Prostate gland (tissue), 2 donors: ENCODE measurements at regions of chrX and their contacts with region 1.

Region 1: GRCh38 chrX:135521405-135522189 is 1.1 kb downstream of the INTS6L start:
- DNase-seq: peak; percentile 78
- H3K4me3 ChIP-seq: peak overlapping the region; percentile 51 to 64
- H3K27ac ChIP-seq: peak overlapping the region; percentile 86 to 89
- H3K4me1 ChIP-seq: no peaks in the 10 kb centered on the region
- H3K27me3 ChIP-seq: no peaks in the 10 kb centered on the region
- CTCF ChIP-seq: no peak
- POLR2A ChIP-seq: peak; percentile 38

Region 2: DNA sequence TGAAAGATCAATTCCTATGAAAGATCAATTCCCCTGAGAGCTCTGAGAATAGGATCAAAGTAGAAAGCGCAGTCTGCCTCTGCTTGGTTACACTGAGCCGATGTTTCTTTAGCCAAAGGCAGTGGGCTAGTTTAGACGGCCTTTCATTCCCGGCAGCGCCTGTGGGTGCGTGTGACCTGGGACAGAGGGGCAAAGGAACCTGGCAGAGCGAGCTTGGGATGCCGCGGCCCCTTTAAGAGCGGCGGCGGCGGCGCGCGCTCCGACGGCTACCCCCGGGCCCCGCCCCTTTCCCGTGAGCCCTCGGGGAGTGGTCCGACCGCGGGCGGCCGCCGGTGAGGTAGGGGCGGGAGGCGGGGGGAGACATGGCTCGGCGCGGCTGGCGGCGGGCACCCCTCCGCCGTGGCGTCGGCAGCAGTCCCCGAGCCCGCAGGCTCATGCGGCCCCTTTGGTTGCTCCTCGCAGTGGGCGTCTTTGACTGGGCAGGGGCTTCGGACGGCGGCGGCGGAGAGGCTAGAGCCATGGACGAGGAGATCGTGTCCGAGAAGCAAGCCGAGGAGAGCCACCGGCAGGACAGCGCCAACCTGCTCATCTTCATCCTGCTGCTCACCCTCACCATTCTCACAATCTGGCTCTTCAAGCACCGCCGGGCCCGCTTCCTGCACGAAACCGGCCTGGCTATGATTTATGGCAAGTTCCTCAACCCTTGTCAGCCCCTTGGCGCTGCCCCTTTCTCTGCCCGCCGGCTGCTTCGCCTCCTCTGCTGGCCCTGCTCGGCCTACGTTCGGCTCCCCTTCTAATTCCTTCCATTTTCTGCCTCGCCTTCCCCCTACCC is 463.8 kb after region 1 on chrX and contains the start of gene SLC9A6:
- intact Hi-C with region 1: loop called (anchors 10 kb)
- DNase-seq: peak; percentile 56
- H3K4me3 ChIP-seq: peak within 1 kb of the TSS; percentile 53 to 56
- H3K27ac ChIP-seq: peak within 1 kb of the TSS; percentile 56 to 68
- H3K4me1 ChIP-seq: no peaks in the 10 kb centered on the region
- H3K27me3 ChIP-seq: no peaks in the 10 kb centered on the region
- CTCF ChIP-seq: no peak
- POLR2A ChIP-seq: peak; percentile 14
- total RNA-seq, gene SLC9A6: 7.4 to 14.5 TPM